ENCODE measurements at regions of chr5 and their contacts with region 1.

Region 1: GRCh38 chr5:38420691-38421390 is 135.6 kb downstream of the LIFR start:
- DNase-seq: no peak
- H3K4me3 ChIP-seq: no peak overlapping the region
- H3K27me3 ChIP-seq: peaks cover 2% of the 10 kb centered on the region
- CTCF ChIP-seq: peak; percentile 80

Region 2: DNA sequence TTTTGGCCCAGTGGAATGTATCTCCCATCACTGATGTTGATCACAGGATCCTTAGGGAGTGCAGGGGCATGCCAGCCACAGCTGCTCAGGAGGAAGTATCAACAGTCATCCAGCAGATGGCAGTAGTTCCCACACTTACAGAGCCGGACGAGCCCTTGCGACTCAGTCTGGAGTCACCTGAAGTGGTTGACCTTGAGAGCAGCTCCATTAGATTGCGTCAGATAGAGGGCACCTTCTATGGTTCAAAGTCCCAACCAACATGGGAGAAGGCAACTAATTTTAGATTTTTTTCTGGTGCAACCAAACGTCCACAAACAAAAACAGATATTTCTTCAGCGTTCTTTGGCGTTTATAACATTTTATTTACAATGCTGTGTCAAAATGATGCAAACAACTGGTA is 37.9 kb before region 1 on chr5:
- CTCF ChIA-PET with region 1: interaction called, 12 read pairs
- POLR2A ChIA-PET with region 1: no interaction called
- DNase-seq: no peak
- H3K4me3 ChIP-seq: no peak overlapping the region
- H3K27me3 ChIP-seq: peaks cover 11% of the 10 kb centered on the region
- CTCF ChIP-seq: peak; percentile 89

Region 3: DNA sequence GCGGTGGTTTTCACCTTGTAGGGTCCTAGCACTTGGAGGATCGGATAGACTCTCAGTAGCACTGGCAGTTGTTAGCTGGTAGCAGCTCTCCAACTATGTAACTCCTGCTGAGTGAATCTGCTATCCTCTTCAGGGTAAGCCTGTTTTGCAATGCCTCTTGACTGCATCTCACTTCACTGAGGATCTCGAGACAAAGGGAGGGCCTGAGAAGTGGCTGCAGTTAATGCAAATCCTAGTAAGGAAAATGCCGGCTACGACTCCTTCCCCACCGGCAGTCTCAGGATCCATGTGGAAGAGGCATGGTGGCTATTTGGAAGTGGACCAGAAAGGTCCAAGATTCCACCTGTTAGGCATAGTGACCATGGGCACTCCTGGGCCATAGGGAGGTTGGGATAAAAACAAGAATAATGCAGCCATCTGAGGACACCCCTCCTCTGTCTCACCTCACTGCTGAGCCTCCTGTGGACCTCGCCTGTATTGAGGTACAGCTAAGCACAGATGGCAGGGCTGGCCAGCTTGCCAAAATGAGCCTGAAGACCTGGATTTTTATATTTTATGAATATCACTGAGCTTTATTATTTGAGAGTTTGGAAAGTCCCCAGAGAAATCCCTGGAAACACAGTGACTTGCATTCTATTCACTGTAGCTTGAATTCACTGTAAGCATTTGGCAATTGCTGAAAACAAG is 10.4 kb before region 1 on chr5:
- CTCF ChIA-PET with region 1: interaction called, 13 read pairs
- POLR2A ChIA-PET with region 1: no interaction called
- DNase-seq: no peak
- H3K4me3 ChIP-seq: no peak overlapping the region
- H3K27me3 ChIP-seq: 0 out of 2 replicates have a peak, but pooled peaks cover 1% of the 10 kb centered on the region
- CTCF ChIP-seq: no peak

Region 4: GRCh38 chr5:38433160-38433861 is 12.5 kb after region 1 on chr5:
- CTCF ChIA-PET with region 1: interaction called, 42 read pairs
- POLR2A ChIA-PET with region 1: no interaction called
- DNase-seq: peak; percentile 63
- H3K4me3 ChIP-seq: no peak overlapping the region
- H3K27me3 ChIP-seq: no peaks in the 10 kb centered on the region
- CTCF ChIP-seq: 0 out of 2 replicates have a peak, but pooled peaks have one; percentile 19

Region 5: DNA sequence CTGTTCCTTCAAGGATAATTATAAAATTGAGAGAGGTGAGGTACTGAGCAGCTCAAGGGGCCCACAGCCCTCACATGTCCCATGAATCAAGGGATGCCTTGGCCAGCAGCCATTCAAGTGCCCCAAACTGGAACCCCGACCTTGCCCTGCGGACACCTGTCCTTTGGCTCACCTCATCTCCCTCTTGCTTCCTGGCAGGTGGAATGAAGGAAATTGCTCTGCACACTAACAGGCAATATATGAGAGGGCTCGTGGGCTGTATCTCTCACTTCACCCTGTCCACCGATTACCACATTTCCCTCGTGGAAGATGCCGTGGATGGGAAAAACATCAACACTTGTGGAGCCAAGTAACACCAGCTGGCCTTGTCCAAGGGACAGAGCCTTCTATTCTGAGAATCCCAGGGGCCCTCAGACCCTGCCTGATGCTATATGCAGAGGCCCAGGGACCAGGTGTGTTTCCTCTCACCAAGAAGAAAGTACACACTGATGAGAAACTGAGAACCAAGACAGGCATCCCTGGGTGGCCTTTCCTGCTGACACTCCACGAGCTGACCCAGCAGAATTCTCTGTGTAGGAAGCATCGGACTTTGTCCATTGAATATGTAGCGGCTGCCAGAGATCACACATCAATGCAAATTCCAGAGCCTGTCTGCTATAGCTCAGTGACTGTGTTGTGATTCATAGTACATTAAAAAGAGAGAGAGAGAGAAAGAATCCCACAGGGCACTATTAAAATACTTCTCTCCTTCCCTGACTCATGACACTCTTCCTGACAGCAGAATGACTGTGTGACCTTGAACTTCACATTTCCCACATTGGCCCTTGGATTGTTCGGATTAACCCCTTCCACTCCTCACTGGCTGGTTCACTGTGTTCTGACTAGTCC is 43.0 kb after region 1 on chr5:
- CTCF ChIA-PET with region 1: interaction called, 12 read pairs
- POLR2A ChIA-PET with region 1: no interaction called
- DNase-seq: peak; percentile 67
- H3K4me3 ChIP-seq: no peak overlapping the region
- H3K27me3 ChIP-seq: no peaks in the 10 kb centered on the region
- CTCF ChIP-seq: no peak